ENCODE measurements at regions of chr10 and their contacts with region 1.

Region 1: DNA sequence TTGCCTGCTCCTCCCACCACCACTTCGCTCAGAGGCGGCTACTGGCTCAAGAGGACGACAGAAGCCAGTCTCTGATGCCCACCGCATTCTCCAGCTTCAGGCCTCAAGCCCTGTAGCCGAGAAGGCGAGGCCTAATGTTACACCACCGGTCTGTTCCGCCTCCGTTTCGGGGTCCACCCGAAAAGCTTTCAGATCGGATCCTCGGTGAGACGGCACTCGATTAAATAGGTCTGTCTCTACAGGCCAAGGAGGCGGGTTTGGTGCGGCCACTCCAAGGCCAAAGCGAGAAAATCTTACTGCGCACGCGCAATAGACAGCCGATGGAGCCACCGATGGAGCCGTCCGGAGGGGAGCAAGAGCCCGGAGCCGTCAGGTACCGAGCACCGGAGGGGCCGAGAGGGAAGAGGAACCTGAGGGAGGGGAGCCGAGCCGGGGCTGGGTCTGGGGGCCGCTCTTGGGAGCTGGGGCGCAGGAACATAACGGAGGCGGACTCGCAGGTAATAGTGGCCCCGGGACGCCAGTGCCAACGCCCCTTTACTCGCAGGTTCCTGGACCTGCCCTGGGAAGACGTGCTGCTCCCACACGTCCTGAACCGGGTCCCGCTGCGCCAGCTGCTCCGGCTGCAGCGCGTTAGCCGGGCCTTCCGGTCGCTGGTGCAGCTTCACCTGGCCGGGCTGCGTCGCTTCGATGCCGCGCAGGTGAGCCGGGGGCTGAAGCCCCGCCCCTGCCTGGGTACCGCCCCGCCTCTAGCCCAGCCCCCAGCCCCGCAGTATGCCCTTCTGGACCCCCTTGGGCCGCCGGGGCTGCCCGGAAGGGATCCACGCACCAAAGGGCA is at the start of gene FBXL15:
- DNase-seq: peak; percentile 97
- H3K4me3 ChIP-seq: peak within 1 kb of the TSS; percentile 83
- H3K4me3 Mint-ChIP-seq: peak within 1 kb of the TSS; percentile 99
- H3K27ac Mint-ChIP-seq: peak within 1 kb of the TSS; percentile 97
- H3K4me1 ChIP-seq: peaks cover 9% of the 10 kb centered on the region; the same call in 1 of the 2 replicates
- H3K4me1 Mint-ChIP-seq: peaks cover 7% of the 10 kb centered on the region
- H3K27me3 ChIP-seq: no peaks in the 10 kb centered on the region
- H3K27me3 Mint-ChIP-seq: no peaks in the 10 kb centered on the region
- CTCF ChIP-seq: no peak
- total RNA-seq, gene FBXL15: 7.9 and 8.6 TPM in 2 replicates

Region 2: DNA sequence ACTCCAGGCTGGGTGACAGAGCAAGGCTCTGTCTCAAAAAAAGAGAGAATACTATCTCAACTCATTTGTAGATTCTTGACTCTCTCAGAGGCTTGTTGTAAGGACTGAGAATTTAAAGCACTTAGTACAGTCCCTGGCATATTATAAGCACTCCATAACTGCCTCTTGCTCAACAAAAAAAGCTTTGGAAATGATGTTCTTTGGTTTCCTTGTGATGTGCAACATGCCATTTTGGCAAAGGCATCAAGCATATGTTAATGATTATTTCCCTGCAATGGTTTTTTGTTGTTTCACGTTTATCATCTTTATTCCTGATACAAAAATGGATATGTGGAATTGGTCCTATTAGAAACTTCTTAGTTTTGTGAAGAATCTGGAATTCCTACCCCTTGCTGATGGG is 253.2 kb before region 1 on chr10:
- CTCF ChIA-PET with region 1: interaction called, 12 read pairs
- POLR2A ChIA-PET with region 1: no interaction called
- intact Hi-C with region 1: no loop called
- DNase-seq: no peak
- H3K4me3 ChIP-seq: no peak overlapping the region
- H3K4me3 Mint-ChIP-seq: no peak overlapping the region
- H3K27ac Mint-ChIP-seq: no peak overlapping the region
- H3K4me1 ChIP-seq: no peaks in the 10 kb centered on the region
- H3K4me1 Mint-ChIP-seq: no peaks in the 10 kb centered on the region
- H3K27me3 ChIP-seq: no peaks in the 10 kb centered on the region
- H3K27me3 Mint-ChIP-seq: no peaks in the 10 kb centered on the region
- CTCF ChIP-seq: no peak

Region 3: DNA sequence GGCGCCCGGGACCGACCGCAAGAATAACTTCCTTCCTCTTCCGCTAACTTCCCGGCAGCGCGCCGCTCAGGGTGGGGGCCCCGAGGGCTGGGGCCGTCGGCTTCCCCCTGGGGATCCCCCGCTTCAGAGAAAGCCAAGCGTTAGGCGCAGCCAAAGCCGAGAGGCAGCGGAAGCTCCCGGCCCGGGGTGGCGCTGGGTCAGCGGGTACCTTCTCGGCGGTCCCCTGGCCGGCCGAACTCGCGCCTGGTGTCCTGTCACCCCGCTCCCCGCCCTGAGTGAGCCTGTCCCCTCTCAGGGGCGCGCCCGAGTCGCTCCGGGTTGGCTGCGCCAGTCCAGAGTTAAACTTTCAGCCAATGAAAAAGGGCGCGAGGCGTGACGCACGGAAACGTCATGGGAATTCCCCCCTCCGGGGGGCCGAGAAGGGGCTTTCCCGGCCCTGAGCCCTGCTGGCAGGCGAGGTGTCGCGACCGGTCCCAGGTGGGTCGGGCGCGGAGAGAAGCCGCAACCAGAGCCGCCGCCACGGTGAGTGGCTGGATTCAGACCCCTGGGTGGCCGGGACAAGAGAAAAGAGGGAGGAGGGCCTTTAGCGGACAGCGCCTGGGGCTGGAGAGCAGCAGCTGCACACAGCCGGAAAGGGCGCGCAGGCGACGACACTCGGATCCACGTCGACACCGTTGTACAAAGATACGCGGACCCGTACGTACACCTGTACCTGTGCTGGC is 26.8 kb before region 1 on chr10:
- CTCF ChIA-PET with region 1: interaction called, 28 read pairs
- POLR2A ChIA-PET with region 1: interaction called, 3 read pairs
- intact Hi-C with region 1: loop called (anchors 1 kb)
- DNase-seq: peak; percentile 95
- H3K4me3 ChIP-seq: peak overlapping the region; percentile 75
- H3K4me3 Mint-ChIP-seq: peak overlapping the region; percentile 90
- H3K27ac Mint-ChIP-seq: peak overlapping the region; percentile 90
- H3K4me1 ChIP-seq: peaks cover 14% of the 10 kb centered on the region
- H3K4me1 Mint-ChIP-seq: peaks cover 14% of the 10 kb centered on the region
- H3K27me3 ChIP-seq: no peaks in the 10 kb centered on the region
- H3K27me3 Mint-ChIP-seq: no peaks in the 10 kb centered on the region
- CTCF ChIP-seq: no peak

Region 4: GRCh38 chr10:102432162-102432950 is 11.3 kb after region 1 on chr10 and contains the start of gene CUEDC2:
- CTCF ChIA-PET with region 1: interaction called, 37 read pairs
- POLR2A ChIA-PET with region 1: interaction called, 20 read pairs
- intact Hi-C with region 1: loop called (anchors 1 kb)
- DNase-seq: peak; percentile 97 to 98
- H3K4me3 ChIP-seq: peak within 1 kb of the TSS; percentile 77
- H3K4me3 Mint-ChIP-seq: peak within 1 kb of the TSS; percentile 73
- H3K27ac Mint-ChIP-seq: peak within 1 kb of the TSS; percentile 65
- H3K4me1 ChIP-seq: peaks cover 11% of the 10 kb centered on the region
- H3K4me1 Mint-ChIP-seq: peaks cover 32% of the 10 kb centered on the region
- H3K27me3 ChIP-seq: no peaks in the 10 kb centered on the region
- H3K27me3 Mint-ChIP-seq: no peaks in the 10 kb centered on the region
- CTCF ChIP-seq: no peak
- total RNA-seq, gene CUEDC2: 32.1 and 32.6 TPM in 2 replicates

Region 5: DNA sequence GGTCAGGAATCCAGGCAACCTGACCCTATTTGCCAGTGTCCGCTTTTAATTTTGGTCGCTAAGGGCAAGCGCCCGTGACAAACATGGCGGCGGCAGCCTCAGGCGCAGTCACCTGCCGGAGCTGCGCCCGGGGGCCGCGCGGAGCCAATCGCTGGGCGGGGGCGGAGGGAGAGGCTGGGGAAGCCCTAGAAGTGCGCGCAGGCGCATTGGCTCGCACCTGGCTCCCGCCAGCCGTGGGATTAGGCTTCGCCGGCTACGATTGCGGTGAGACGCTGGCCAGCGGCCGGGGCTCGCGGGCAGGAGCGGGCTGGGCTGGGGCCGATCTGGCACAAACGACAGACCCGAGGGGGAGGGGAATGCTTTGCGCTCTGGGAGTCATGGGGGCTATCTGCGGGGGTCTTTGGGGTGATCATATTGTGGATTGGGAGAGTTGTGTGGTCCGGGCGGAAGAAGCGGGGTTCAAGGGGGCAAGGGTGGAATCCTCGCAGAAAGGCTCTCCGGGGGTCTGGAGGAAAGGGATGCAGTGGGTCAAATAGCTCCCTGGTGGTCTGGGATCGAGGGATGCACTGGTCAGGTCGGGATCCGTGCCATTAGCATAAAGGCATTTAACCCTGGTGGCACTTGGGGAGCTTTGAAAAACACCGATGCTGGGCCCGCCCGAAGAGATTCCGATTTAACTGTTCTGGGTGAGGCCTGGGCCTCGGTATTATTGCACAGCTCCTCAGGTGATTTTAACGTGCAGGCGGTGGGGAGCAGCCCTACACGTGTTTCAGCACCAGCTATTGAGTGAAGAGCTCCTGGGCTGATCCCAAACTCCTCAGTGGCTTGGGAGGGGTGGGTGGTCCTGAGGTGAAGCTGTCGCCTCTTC is 40.4 kb after region 1 on chr10:
- CTCF ChIA-PET with region 1: interaction called, 6 read pairs
- POLR2A ChIA-PET with region 1: no interaction called
- intact Hi-C with region 1: loop called (anchors 2 kb)
- DNase-seq: peak; percentile 94 to 98
- H3K4me3 ChIP-seq: peak overlapping the region; percentile 54
- H3K4me3 Mint-ChIP-seq: peak overlapping the region; percentile 96
- H3K27ac Mint-ChIP-seq: peak overlapping the region; percentile 78
- H3K4me1 ChIP-seq: peaks cover 32% of the 10 kb centered on the region
- H3K4me1 Mint-ChIP-seq: peaks cover 24% of the 10 kb centered on the region
- H3K27me3 ChIP-seq: no peaks in the 10 kb centered on the region
- H3K27me3 Mint-ChIP-seq: no peaks in the 10 kb centered on the region
- CTCF ChIP-seq: no peak

Region 6: GRCh38 chr10:102484021-102484420 is 63.0 kb after region 1 on chr10:
- CTCF ChIA-PET with region 1: interaction called, 6 read pairs
- POLR2A ChIA-PET with region 1: interaction called, 3 read pairs
- intact Hi-C with region 1: loop called (anchors 1 kb)
- DNase-seq: no peak
- H3K4me3 ChIP-seq: no peak overlapping the region
- H3K4me3 Mint-ChIP-seq: no peak overlapping the region
- H3K27ac Mint-ChIP-seq: no peak overlapping the region
- H3K4me1 ChIP-seq: no peaks in the 10 kb centered on the region
- H3K4me1 Mint-ChIP-seq: no peaks in the 10 kb centered on the region
- H3K27me3 ChIP-seq: no peaks in the 10 kb centered on the region
- H3K27me3 Mint-ChIP-seq: no peaks in the 10 kb centered on the region
- CTCF ChIP-seq: no peak

Region 7: GRCh38 chr10:102583435-102584417 is 162.7 kb after region 1 on chr10:
- CTCF ChIA-PET with region 1: interaction called, 14 read pairs
- POLR2A ChIA-PET with region 1: no interaction called
- intact Hi-C with region 1: loop called (anchors 5 kb)
- DNase-seq: peak; percentile 83 to 86
- H3K4me3 ChIP-seq: no peak overlapping the region
- H3K4me3 Mint-ChIP-seq: no peak overlapping the region
- H3K27ac Mint-ChIP-seq: no peak overlapping the region
- H3K4me1 ChIP-seq: no peaks in the 10 kb centered on the region
- H3K4me1 Mint-ChIP-seq: no peaks in the 10 kb centered on the region
- H3K27me3 ChIP-seq: no peaks in the 10 kb centered on the region
- H3K27me3 Mint-ChIP-seq: no peaks in the 10 kb centered on the region
- CTCF ChIP-seq: peak; percentile 78 to 93

Measured in Caco-2 (cell line).